Posterior vena cava (tissue), 2 donors: ENCODE measurements at regions of chr9 and their contacts with region 1.

Region 1: DNA sequence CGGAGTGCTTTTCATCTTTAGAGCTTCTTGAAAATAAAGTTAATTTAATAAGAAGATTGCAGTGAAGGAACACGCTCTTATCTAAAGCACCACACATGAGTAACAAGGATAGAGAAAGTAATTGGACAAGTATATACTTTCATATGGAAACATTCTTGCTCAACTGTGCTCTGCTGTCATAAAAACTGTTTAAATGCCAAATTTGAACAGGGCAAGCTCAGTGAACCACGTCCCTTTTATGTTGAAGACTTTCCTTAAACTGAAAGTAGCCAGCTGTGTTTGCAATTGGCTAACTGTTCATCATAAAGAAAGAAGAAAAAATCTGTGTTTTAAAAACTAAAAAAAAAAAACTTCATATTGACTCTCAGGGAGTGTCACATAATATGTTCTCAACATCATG is 1610.7 kb upstream of the C9orf72 start:
- DNase-seq: no peak

Region 2: DNA sequence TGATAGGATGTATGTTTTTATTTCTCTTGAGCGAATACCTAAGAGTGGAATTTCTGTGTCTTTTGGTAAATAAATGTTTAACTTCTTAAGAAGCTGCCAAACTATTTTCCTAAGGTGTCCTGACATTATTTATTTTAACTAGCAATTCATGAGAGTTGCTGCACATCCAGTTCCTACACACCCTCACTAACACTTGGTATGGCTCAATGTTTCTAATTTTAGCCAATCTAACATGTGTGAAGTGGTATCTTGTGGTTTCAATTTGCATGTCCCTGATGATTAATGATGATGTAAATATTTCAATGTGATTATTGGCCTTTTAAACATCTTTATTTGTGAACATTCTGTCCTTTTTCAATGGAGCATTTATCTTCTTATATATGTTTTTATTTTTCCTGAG is 484.8 kb after region 1 on chr9:
- intact Hi-C with region 1: loop called in 1 of 2 experiments (anchors 5 kb)
- DNase-seq: no peak